ENCODE measurements at regions of chr19 and their contacts with region 1.

Region 1: GRCh38 chr19:38634757-38635482 is 12.5 kb upstream of the ACTN4 start:
- DNase-seq: peak in 1 of 2 experiments; percentile 95
- H3K4me3 ChIP-seq: no peak overlapping the region
- H3K27ac ChIP-seq: no peak overlapping the region
- H3K4me1 ChIP-seq: no peaks in the 10 kb centered on the region; a peak in 2 of 7 replicates
- H3K27me3 ChIP-seq: no peaks in the 10 kb centered on the region
- CTCF ChIP-seq: peak; percentile 87 to 91 (median 90)
- EP300 ChIP-seq: no peak
- POLR2A ChIP-seq: no peak
- RAD21 ChIP-seq: peak; percentile 57 to 70

Region 2: GRCh38 chr19:38538386-38538785 is 96.5 kb before region 1 on chr19:
- CTCF ChIA-PET with region 1: no interaction called
- POLR2A ChIA-PET with region 1: no interaction called
- DNase-seq: no peak
- H3K4me3 ChIP-seq: no peak overlapping the region
- H3K27ac ChIP-seq: no peak overlapping the region
- H3K4me1 ChIP-seq: no peaks in the 10 kb centered on the region
- H3K27me3 ChIP-seq: no peaks in the 10 kb centered on the region
- CTCF ChIP-seq: no peak
- EP300 ChIP-seq: no peak
- POLR2A ChIP-seq: no peak
- RAD21 ChIP-seq: no peak

Region 3: GRCh38 chr19:38561658-38562057 is 73.3 kb before region 1 on chr19:
- CTCF ChIA-PET with region 1: interaction called, 12 read pairs
- POLR2A ChIA-PET with region 1: no interaction called
- DNase-seq: no peak
- H3K4me3 ChIP-seq: no peak overlapping the region
- H3K27ac ChIP-seq: no peak overlapping the region
- H3K4me1 ChIP-seq: no peaks in the 10 kb centered on the region
- H3K27me3 ChIP-seq: no peaks in the 10 kb centered on the region; a peak in 1 of 7 replicates
- CTCF ChIP-seq: no peak
- EP300 ChIP-seq: no peak
- POLR2A ChIP-seq: no peak
- RAD21 ChIP-seq: no peak

Region 4: DNA sequence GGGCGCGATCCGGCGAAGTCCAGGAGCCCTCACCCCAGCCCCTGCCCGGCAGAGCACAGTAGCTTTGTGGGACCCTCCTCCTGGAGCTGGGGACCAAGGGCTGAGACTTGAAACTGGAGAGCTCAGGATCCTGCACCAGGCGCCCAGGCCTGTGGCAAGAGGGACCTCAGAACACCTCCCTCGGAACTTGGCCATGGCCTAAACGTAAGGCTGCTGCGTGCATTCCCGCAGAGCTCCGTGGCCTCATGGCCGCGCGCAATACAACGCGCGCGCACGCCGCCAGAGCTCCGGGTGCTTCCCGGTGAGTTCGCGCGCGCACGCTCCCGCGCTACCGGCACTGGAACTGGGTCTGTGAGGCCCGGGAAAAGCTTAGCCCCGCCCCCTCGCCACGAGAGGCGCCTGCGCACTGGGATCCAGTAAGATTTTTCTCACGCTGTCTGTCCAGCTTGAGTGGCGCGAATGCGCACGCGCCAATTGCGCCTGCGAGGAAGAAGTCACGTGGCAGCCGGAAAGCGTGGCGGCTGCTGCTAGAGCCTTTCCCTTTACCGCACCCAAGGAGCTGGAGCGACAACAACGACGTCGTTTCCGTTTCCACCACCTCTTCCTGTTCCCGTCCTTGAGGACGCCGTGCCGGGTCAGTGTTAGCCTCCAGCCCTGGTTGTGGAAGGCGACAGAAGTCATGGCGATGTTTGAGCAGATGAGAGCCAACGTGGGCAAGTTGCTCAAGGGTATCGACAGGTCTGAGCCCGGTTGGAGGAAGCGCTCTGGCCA is 16.1 kb before region 1 on chr19 and contains the start of gene EIF3K:
- CTCF ChIA-PET with region 1: interaction called, 27 read pairs
- POLR2A ChIA-PET with region 1: interaction called, 12 read pairs
- DNase-seq: peak; percentile 99 to 100
- H3K4me3 ChIP-seq: peak within 1 kb of the TSS; percentile 87 to 99 (median 92)
- H3K27ac ChIP-seq: peak within 1 kb of the TSS; percentile 78
- H3K4me1 ChIP-seq: peaks cover 4 to 14% (median 11%) of the 10 kb centered on the region in 4 experiments
- H3K27me3 ChIP-seq: no peaks in the 10 kb centered on the region
- CTCF ChIP-seq: 0 out of 4 replicates have a peak, but pooled peaks of 1 of the 3 experiments have one; percentile 1
- EP300 ChIP-seq: no peak
- POLR2A ChIP-seq: peak; percentile 52 to 84
- RAD21 ChIP-seq: no peak
- total RNA-seq, gene EIF3K: 329 and 344 TPM in 2 replicates

Region 5: DNA sequence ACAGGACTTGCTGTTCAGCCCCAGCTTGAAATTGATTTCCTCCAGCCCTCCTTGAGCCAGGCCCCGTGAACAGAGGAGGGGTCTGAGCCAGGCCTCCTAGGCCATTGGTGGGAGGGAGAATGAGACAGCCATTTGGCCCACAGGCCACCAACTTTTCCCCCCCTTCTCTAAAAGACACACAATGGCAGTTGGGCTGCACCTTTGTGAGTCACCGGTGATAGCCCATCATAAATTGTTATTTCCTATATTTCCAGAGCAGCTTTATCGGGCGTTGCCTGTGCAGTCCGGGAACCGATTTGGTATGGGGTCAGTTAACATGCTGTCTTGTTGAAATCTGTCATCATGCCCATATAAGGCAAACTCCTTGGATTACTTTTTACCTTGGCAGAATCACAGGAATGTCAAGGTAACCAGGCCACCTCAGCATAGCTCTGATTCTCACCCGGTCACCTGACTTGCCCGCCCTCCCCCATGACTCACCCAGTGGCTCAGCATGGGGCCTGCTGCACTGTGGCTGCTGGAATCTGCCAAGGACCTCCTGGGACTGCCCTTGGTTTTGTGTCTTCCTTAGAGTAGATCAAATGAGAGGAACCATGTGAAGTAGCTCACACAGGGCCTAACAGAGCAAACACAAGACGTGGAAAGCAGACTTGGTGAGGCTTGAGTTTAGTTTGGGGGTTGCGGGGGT is 48.6 kb after region 1 on chr19:
- CTCF ChIA-PET with region 1: interaction called, 17 read pairs
- POLR2A ChIA-PET with region 1: interaction called, 9 read pairs
- DNase-seq: peak; percentile 83 to 85
- H3K4me3 ChIP-seq: peak overlapping the region in 1 of 4 experiments; percentile 32; a peak in 1 of 8 replicates
- H3K27ac ChIP-seq: peak overlapping the region; percentile 95
- H3K4me1 ChIP-seq: peaks cover 28 to 46% (median 41%) of the 10 kb centered on the region in 4 experiments
- H3K27me3 ChIP-seq: no peaks in the 10 kb centered on the region
- CTCF ChIP-seq: no peak
- EP300 ChIP-seq: peak in 1 of 2 experiments; percentile 84; a peak in 1 of 3 replicates
- POLR2A ChIP-seq: peak in 1 of 2 experiments; percentile 32; a peak in 1 of 3 replicates
- RAD21 ChIP-seq: no peak

Region 6: DNA sequence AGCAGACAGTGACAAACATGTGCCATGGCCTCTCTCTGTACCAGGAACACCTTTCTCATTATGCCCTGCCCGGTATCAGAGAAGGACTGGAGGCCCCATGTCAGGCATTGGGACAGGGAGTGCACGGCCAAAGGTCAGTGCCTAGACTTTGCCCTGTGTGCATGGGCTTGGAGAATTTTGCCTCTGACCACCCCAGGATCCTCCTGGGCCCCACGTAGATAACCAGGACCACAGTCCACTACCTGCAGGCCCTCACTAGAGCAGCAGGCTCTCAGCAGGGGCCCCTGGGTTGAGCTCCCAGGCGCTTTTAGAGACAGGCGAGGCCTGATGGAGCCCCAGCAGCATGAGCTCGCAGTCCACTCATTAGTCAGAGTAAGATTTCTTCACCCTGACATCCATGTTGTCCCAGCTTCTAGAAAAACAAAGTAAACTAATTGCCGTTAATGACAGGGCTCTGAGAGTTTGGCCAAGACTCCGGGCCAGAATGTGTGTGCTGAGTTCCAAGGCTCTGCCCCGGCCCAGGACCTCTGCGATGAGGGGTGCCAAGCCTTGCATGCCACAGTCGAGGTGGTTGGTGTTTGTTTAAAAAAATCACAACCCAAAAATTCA is 66.6 kb after region 1 on chr19:
- CTCF ChIA-PET with region 1: interaction called, 39 read pairs
- POLR2A ChIA-PET with region 1: interaction called, 3 read pairs
- DNase-seq: no peak
- H3K4me3 ChIP-seq: no peak overlapping the region
- H3K27ac ChIP-seq: no peak overlapping the region
- H3K4me1 ChIP-seq: peaks cover 0 to 16% (median 9%) of the 10 kb centered on the region in 4 experiments; a peak in 5 of 7 replicates
- H3K27me3 ChIP-seq: no peaks in the 10 kb centered on the region; a peak in 1 of 7 replicates
- CTCF ChIP-seq: no peak
- EP300 ChIP-seq: no peak
- POLR2A ChIP-seq: no peak
- RAD21 ChIP-seq: no peak

Measured in H1 (cell line).